MCF 10A (cell line): ENCODE measurements at regions of chr7 and their contacts with region 1.

Region 1: DNA sequence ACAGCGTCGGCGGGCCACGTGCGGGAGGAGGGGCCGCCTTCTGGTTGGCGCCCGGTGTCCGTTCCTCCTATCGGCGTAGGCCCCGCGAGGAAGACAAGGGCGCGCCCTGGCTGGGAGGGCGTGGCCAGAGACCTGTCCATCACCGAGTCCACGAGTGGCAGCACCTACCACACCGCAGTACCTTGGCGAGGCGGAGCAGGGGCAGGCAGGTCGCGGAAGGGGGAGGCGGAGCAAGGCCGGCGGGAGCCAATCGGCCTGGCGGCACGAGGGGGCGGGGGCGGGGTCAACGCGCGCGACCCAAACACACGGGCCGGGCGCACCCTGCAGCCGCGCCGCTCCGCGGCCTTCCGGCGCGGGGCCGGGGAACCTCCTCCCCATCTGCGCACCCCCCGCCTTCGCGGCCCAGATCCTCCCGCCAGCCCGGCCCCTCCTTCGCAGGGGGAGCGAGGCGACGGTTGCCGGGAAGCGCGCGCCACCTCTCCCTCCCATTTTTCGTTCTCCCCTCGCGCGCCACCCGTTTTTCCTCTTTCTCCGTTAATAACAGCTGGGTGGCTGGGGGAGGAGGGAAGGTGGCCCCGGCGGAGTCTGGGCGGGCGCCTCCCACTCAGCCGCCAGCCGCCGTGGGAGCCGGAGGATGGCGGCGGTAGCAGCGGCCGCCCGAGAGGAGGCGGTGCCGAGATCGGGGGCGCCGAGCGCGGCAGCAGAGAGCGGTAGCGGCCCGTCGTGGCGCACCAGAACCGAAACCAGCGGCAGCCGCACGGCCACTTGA is at the start of gene ZNRF2:
- DNase-seq: peak; percentile 99
- H3K4me3 Mint-ChIP-seq: peak within 1 kb of the TSS; percentile 76
- H3K27ac Mint-ChIP-seq: peak within 1 kb of the TSS; percentile 89
- H3K4me1 Mint-ChIP-seq: peaks cover 20% of the 10 kb centered on the region
- H3K27me3 Mint-ChIP-seq: no peaks in the 10 kb centered on the region
- CTCF ChIP-seq: peak; percentile 66
- total RNA-seq, gene ZNRF2: 9.8 and 10.2 TPM in 2 replicates

Region 2: GRCh38 chr7:30157204-30157603 is 127.3 kb before region 1 on chr7:
- CTCF ChIA-PET with region 1: no interaction called
- POLR2A ChIA-PET with region 1: no interaction called
- intact Hi-C with region 1: no loop called
- DNase-seq: no peak
- H3K4me3 Mint-ChIP-seq: no peak overlapping the region
- H3K27ac Mint-ChIP-seq: no peak overlapping the region
- H3K4me1 Mint-ChIP-seq: peaks cover under 1% of the 10 kb centered on the region
- H3K27me3 Mint-ChIP-seq: no peaks in the 10 kb centered on the region
- CTCF ChIP-seq: no peak

Region 3: DNA sequence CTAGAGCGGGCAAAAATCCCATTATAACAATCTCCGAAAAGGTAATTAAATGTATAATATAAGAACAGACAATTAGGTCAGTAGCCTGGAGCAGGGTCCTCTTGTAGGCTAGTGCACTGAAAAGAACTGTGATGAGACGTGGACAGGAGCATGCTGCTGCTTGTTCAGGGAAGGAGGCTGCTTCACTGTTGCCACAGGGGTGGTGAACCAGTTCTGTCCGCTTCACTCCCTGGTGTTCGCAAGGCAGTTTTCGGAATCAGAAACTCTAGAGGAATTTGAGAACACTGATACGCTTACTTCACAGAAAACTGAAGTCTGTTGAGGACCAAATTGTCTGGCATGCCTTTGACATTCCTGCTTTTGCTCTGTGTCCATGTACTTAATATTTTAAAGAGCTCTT is 17.3 kb after region 1 on chr7:
- CTCF ChIA-PET with region 1: interaction called, 7 read pairs
- POLR2A ChIA-PET with region 1: interaction called, 17 read pairs
- intact Hi-C with region 1: no loop called
- DNase-seq: peak; percentile 84
- H3K4me3 Mint-ChIP-seq: peak overlapping the region; percentile 31
- H3K27ac Mint-ChIP-seq: peak overlapping the region; percentile 27
- H3K4me1 Mint-ChIP-seq: peaks cover 29% of the 10 kb centered on the region
- H3K27me3 Mint-ChIP-seq: no peaks in the 10 kb centered on the region
- CTCF ChIP-seq: no peak

Region 4: DNA sequence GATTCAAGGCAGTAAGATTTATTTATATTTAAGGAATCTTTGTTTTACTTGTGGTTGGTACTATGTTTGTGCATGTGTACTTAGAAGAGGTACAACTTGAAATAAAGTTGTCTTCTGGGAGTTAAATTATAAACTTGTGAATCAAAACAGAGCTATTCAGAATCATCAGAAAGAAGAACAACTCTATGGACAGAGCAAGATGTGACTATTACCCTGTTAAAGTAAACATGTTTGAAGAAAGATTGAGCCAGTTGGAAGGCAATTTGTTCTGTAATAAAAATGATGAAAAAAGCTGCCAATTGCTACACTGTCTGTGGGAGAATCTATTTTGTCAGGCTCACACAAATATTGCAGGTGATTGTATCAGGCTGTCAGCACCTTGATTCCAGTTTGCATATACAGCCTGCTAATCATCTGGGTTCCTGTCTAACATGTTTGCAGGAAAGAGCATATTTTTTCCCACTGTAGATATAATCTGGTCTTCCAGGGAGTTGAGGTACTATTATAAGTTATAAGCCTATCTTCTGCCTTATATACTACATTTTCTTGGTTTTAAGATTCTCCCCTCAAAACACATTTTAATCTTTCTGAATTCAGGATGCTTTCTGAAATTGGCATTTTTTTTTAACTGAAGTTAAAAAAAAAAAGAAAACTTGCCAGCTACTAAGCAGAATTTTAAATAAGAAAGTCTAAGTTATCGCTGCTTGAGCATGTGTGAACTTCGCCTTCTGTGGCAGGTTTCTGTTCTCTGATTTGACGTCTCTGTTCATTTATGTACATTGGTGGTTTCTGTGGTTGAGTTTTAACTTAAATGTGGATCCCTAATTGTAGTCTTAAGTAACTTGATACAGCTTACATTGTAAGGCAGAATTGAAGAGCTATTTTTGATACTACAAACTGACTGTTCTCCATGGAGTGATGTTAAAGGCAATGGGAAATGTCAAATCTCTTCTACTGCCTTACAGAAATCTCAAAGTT is 45.9 kb after region 1 on chr7:
- CTCF ChIA-PET with region 1: no interaction called
- POLR2A ChIA-PET with region 1: interaction called, 11 read pairs
- intact Hi-C with region 1: no loop called
- DNase-seq: no peak
- H3K4me3 Mint-ChIP-seq: no peak overlapping the region
- H3K27ac Mint-ChIP-seq: no peak overlapping the region
- H3K4me1 Mint-ChIP-seq: peaks cover 32% of the 10 kb centered on the region
- H3K27me3 Mint-ChIP-seq: no peaks in the 10 kb centered on the region
- CTCF ChIP-seq: no peak

Region 5: GRCh38 chr7:30412810-30413504 is 128.5 kb after region 1 on chr7:
- CTCF ChIA-PET with region 1: interaction called, 64 read pairs
- POLR2A ChIA-PET with region 1: interaction called, 48 read pairs
- intact Hi-C with region 1: loop called (anchors 1 kb)
- DNase-seq: peak; percentile 90
- H3K4me3 Mint-ChIP-seq: no peak overlapping the region
- H3K27ac Mint-ChIP-seq: no peak overlapping the region
- H3K4me1 Mint-ChIP-seq: peaks cover 10% of the 10 kb centered on the region
- H3K27me3 Mint-ChIP-seq: no peaks in the 10 kb centered on the region
- CTCF ChIP-seq: peak; percentile 54

Region 6: GRCh38 chr7:30888747-30889146 is 604.3 kb after region 1 on chr7:
- CTCF ChIA-PET with region 1: no interaction called
- POLR2A ChIA-PET with region 1: no interaction called
- intact Hi-C with region 1: no loop called
- DNase-seq: peak; percentile 62
- H3K4me3 Mint-ChIP-seq: no peak overlapping the region
- H3K27ac Mint-ChIP-seq: no peak overlapping the region
- H3K4me1 Mint-ChIP-seq: peaks cover 6% of the 10 kb centered on the region
- H3K27me3 Mint-ChIP-seq: no peaks in the 10 kb centered on the region
- CTCF ChIP-seq: no peak